Activated T-helper 1 cell treated with anti-CD3 and anti-CD28 coated beads, Interleukin-12 subunit alpha, Interleukin-12 subunit beta, Interleukin-2, Interleukin-4 antibody, amounts not matched to agents 30 ng/mL and 10 ng/mL and 1 ng/mL, durations not matched to agents 14 hours and 24 hours and 36 hours (primary cell): ENCODE measurements at regions of chr3 and their contacts with region 1.

Region 1: DNA sequence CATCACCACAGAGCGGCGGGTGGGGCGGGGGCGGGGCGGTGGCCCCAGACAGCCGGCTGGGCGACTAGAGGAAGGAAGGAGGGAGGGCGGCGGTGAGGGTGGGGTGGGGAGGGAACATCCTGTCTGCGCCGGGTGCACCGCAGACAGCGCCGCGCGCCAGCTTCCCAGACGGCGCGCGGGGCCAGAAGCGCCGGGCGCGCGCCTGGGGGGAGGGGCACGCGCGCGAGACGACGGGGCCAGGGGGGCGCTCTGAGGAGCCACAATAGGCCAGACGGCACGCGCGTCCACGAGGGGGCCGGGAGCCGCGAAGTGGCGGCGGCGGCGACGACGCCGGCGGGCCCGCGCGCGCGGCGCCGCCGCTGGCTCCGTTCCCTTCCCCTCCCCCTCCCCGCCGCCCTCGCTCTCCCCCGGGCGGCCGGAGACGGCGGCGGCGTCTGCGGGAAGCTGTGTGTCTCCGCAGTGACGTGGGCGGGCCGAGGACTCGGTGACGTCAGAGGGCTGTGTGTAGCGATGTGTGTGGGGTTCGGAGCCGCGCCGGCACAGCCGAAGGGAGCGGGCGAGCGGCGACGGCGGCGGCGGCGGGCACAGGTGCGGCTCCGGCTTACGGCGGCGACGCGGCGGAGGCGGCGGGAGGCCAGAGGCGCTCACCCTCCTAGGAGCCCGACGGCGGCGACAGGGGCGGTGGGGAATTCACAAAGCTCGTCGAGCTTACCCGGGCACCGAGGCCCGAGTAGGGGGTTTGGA is at the start of gene SKIL:
- DNase-seq: peak; percentile 93
- H3K4me3 Mint-ChIP-seq: peak within 1 kb of the TSS; percentile 91
- H3K27ac Mint-ChIP-seq: peak within 1 kb of the TSS; percentile 98
- H3K4me1 Mint-ChIP-seq: peaks cover 47% of the 10 kb centered on the region
- H3K27me3 Mint-ChIP-seq: peaks cover 9% of the 10 kb centered on the region
- total RNA-seq, gene SKIL: 27.5 and 29.4 TPM in 2 replicates

Region 2: GRCh38 chr3:169410430-169410829 is 946.9 kb before region 1 on chr3:
- intact Hi-C with region 1: no loop called
- DNase-seq: no peak
- H3K4me3 Mint-ChIP-seq: no peak overlapping the region
- H3K27ac Mint-ChIP-seq: no peak overlapping the region
- H3K4me1 Mint-ChIP-seq: no peaks in the 10 kb centered on the region
- H3K27me3 Mint-ChIP-seq: no peaks in the 10 kb centered on the region

Region 3: DNA sequence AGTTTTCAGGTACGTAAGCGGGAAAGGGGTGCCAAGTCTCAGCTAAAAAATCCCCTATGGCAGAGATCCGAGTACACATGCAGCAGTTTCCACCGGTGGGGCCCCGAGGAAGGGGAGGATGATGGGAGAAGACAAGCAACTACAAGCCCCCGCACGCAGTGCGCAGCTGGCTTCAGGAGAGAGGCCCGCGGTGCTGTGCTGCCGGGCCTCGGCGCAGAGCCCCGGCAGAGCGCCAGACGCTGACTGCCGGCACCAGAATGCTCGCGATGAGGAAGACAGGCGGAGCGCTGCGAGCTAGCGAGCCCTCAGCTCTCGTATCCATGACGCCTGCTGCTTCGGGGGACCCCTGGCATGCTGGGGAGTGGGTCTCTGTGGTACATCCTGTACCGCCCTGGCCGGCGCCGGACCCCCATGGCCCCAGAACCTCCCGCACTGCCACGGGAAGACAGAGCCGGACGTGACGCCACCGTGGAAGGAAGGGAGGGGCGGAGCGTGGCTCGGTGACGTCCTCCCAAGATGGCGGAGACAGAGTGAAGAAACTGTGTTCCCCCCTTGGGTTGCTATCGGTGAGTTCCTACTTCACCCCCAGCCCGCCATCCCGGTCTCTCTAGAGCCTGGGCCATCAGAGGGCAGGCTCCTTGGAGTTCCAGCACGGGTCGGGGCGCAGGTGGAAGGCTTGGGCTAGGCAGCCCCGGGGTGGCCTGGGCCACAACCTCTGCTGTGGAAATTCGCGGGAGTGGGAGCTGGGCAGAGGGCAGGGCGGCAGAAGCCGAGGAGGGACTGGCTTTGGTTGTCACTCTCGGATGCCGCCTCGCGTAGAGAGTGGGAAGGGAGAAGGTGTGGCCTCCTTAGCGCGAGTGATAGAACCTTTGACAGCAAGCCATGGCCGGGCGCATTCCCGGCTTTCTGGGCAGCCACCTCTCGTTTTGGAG is 584.2 kb before region 1 on chr3 and contains the start of gene MYNN:
- intact Hi-C with region 1: loop called (anchors 2 kb)
- DNase-seq: peak; percentile 91
- H3K4me3 Mint-ChIP-seq: peak within 1 kb of the TSS; percentile 97
- H3K27ac Mint-ChIP-seq: peak within 1 kb of the TSS; percentile 99
- H3K4me1 Mint-ChIP-seq: peaks cover 56% of the 10 kb centered on the region
- H3K27me3 Mint-ChIP-seq: peaks cover 5% of the 10 kb centered on the region
- total RNA-seq, gene MYNN: 14.5 and 16.8 TPM in 2 replicates

Region 4: GRCh38 chr3:170055209-170055608 is 302.1 kb before region 1 on chr3:
- intact Hi-C with region 1: loop called (anchors 5 kb)
- DNase-seq: no peak
- H3K4me3 Mint-ChIP-seq: no peak overlapping the region
- H3K27ac Mint-ChIP-seq: no peak overlapping the region
- H3K4me1 Mint-ChIP-seq: peaks cover 43% of the 10 kb centered on the region
- H3K27me3 Mint-ChIP-seq: no peaks in the 10 kb centered on the region

Region 5: GRCh38 chr3:170257145-170257544 is 100.2 kb before region 1 on chr3:
- intact Hi-C with region 1: loop called (anchors 1 kb)
- DNase-seq: no peak
- H3K4me3 Mint-ChIP-seq: no peak overlapping the region
- H3K27ac Mint-ChIP-seq: peak overlapping the region; percentile 72
- H3K4me1 Mint-ChIP-seq: peaks cover 34% of the 10 kb centered on the region
- H3K27me3 Mint-ChIP-seq: no peaks in the 10 kb centered on the region

Region 6: GRCh38 chr3:170572665-170573253 is 215.4 kb after region 1 on chr3:
- intact Hi-C with region 1: loop called (anchors 5 kb)
- DNase-seq: no peak
- H3K4me3 Mint-ChIP-seq: no peak overlapping the region
- H3K27ac Mint-ChIP-seq: no peak overlapping the region
- H3K4me1 Mint-ChIP-seq: peaks cover 14% of the 10 kb centered on the region
- H3K27me3 Mint-ChIP-seq: peaks cover 19% of the 10 kb centered on the region

Region 7: GRCh38 chr3:172039436-172040077 is 1682.2 kb after region 1 on chr3 and contains the start of gene FNDC3B:
- intact Hi-C with region 1: loop called (anchors 5 kb)
- DNase-seq: peak; percentile 89
- H3K4me3 Mint-ChIP-seq: peak within 1 kb of the TSS; percentile 99
- H3K27ac Mint-ChIP-seq: peak within 1 kb of the TSS; percentile 99
- H3K4me1 Mint-ChIP-seq: peaks cover 31% of the 10 kb centered on the region
- H3K27me3 Mint-ChIP-seq: peaks cover 13% of the 10 kb centered on the region
- total RNA-seq, gene FNDC3B: 29.0 and 31.5 TPM in 2 replicates